ENCODE measurements at regions of chr9 and their contacts with region 1.

Region 1: DNA sequence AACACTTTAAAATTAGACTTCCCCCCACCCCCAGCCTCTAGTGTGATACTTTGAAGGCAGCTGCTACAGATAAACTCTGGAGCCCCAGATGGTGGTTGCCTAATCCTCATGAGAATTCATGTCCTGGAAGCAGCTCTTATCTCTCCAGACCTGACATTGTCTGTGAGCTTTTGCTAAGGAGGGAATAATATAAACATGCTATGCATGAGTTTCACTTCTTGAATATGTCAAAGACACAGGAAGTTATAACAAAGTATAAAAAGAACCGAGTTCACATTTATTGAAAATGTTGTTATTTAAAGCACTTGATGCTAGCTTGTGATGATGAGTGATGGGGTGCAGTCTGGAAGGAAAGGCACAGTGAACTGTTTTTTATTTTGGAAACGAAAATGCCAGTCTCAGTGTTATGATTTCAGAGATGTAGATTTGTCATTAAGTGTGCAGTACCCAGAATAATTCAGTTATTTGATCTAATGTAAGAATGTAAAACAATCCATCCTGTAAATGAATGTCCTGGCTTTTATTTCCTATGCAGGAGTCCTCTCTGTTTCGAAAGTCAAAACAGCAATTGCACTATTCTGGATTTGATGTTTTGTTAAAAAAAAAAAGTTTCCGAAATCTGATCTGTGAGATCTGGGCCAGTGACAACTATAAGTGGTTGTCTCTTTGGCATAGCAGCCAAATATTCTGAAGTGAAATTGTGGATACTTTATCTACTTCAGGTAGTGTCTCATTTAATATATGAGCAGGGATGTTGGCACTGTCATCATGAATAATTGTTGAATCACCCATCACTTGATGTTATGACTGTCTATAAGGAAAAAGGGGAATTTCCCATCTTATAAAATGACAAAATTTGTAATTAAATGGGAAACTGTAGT is 77.0 kb downstream of the ZCCHC7 start:
- DNase-seq: no peak
- H3K4me3 Mint-ChIP-seq: peak overlapping the region; percentile 35
- H3K27ac Mint-ChIP-seq: peak overlapping the region; percentile 83
- H3K4me1 Mint-ChIP-seq: peaks cover 48% of the 10 kb centered on the region
- H3K27me3 Mint-ChIP-seq: no peaks in the 10 kb centered on the region

Region 2: GRCh38 chr9:37156781-37157356 is 40.5 kb before region 1 on chr9:
- intact Hi-C with region 1: loop called (anchors 5 kb)
- DNase-seq: no peak
- H3K4me3 Mint-ChIP-seq: no peak overlapping the region
- H3K27ac Mint-ChIP-seq: peak overlapping the region; percentile 64
- H3K4me1 Mint-ChIP-seq: peaks cover 25% of the 10 kb centered on the region
- H3K27me3 Mint-ChIP-seq: no peaks in the 10 kb centered on the region

Region 3: GRCh38 chr9:37209431-37210386 is 12.3 kb after region 1 on chr9:
- intact Hi-C with region 1: loop called (anchors 1 kb)
- DNase-seq: no peak
- H3K4me3 Mint-ChIP-seq: no peak overlapping the region
- H3K27ac Mint-ChIP-seq: peak overlapping the region; percentile 2
- H3K4me1 Mint-ChIP-seq: peaks cover 37% of the 10 kb centered on the region
- H3K27me3 Mint-ChIP-seq: no peaks in the 10 kb centered on the region

Measured in activated T-helper 2 cell treated with anti-CD3 and anti-CD28 coated beads, Interferon-gamma antibody, Interleukin-2, Interleukin-4, amounts not matched to agents 10 μg/mL and 5 μg/mL and 100 μg/mL, durations not matched to agents 14 hours and 24 hours and 36 hours (primary cell).